Activated CD4-positive, alpha-beta memory T cell treated with anti-CD3 and anti-CD28 coated beads for 36 hours (primary cell): ENCODE measurements at regions of chr13 and their contacts with region 1.

Region 1: GRCh38 chr13:30142486-30143211 is 164.7 kb downstream of the KATNAL1 start:
- DNase-seq: peak; percentile 68
- H3K4me3 Mint-ChIP-seq: no peak overlapping the region
- H3K27ac Mint-ChIP-seq: peak overlapping the region; percentile 92
- H3K4me1 Mint-ChIP-seq: peaks cover 70% of the 10 kb centered on the region
- H3K27me3 Mint-ChIP-seq: no peaks in the 10 kb centered on the region

Region 2: DNA sequence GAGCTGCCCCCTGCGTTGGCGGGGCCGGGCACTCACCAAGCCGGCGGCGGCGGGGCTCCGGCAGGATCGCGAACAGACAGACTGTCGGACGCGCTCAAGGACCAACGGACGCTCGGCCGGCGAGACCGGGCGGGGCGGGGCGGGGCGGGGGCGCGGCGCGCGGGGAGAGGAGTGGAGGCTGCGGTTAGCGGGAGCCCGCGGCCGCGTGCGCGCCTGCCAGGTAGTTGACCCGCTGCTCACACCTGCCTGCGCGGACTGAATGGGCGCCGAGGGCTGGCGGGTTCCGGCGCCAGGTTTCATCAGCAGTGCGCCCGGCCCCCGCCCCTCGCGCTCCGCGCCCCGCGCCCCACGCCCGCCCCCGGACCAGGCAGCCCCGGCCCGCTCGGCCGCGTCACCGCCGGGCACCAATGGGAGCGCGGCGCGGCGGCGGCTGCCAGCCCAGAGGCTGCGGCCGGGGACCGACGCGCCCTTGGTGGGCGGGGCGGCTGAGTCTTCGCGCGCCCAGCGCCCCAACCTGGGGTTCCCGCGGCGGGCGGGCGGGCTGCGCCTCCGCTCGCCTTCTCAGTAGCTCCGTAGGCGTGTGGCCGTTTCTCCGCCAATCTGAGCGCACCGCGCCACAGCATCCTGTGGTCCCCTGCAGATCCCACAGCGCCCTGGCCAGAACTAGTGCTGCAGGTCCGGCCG is 547.1 kb before region 1 on chr13 and contains the start of gene SLC7A1:
- CTCF ChIA-PET with region 1: no interaction called
- POLR2A ChIA-PET with region 1: no interaction called
- intact Hi-C with region 1: no loop called
- DNase-seq: peak; percentile 90
- H3K4me3 Mint-ChIP-seq: peak within 1 kb of the TSS; percentile 89
- H3K27ac Mint-ChIP-seq: peak within 1 kb of the TSS; percentile 97
- H3K4me1 Mint-ChIP-seq: peaks cover 45% of the 10 kb centered on the region
- H3K27me3 Mint-ChIP-seq: peaks cover 1% of the 10 kb centered on the region
- total RNA-seq, gene SLC7A1: 106 to 114 TPM

Region 3: DNA sequence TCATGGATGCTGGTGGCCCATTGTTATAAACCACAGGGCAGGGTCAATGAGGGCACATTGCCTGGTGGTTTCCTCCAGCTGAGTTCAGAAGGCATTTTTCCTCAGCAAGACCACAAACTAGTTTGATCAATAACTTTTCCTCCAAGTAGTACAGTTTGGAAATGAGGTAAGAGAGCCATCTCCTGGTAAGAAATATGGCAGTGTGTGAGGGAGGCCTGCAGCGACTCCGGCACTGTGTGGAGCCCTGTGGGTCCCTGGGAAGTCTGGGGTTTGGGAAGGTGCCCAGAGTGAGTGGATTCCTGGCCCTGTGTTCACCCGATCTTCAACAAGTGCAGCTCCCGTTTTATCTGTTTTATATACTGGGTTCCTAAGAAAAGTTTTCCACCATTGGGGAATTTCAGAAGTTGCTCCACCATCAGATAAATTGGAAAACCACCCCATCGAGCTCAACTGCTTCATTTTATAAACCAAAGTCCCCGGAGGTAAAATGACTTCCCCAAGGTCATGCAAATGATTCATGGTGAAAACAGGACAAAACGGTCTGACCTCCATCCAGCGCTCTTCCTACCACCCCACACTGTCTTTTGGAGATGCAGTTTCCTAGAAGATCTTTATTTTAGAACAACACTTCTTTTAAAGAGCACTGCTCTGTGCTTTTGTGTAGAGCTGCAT is 16.3 kb after region 1 on chr13:
- CTCF ChIA-PET with region 1: interaction called, 82 read pairs
- POLR2A ChIA-PET with region 1: interaction called, 11 read pairs
- intact Hi-C with region 1: loop called (anchors 1 kb)
- DNase-seq: peak; percentile 45
- H3K4me3 Mint-ChIP-seq: no peak overlapping the region
- H3K27ac Mint-ChIP-seq: peak overlapping the region; percentile 80
- H3K4me1 Mint-ChIP-seq: peaks cover 44% of the 10 kb centered on the region
- H3K27me3 Mint-ChIP-seq: no peaks in the 10 kb centered on the region

Region 4: DNA sequence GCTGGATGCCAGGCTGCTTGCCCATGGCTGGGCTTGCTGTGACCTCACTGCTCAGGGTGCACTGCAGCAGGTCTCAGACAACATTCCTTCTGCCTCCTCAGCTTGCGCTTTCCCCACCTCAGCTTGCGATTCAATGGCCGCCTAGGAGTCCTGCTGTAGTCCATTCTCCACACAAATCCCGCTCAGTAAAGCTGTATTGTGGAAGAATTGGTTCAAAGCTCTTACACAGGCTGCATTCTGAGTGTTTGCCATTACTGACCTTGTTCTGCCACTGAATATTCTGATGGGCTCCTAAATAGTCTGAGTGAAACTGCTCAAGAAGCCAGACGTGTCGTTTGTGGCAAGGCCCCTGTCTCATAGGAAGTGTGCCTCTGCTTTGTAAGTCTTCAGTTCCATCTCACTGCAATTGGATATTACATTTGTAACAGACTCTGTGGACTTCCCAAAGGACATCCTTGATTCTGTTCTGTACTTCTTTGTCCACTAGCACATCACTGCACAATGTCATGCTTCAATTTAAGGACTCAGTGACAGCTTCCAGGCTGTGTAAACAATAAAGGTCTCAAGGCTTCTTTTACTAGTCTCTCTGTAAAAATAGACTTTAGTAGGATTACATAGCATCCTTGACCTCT is 114.9 kb after region 1 on chr13:
- CTCF ChIA-PET with region 1: interaction called, 4 read pairs
- POLR2A ChIA-PET with region 1: no interaction called
- intact Hi-C with region 1: loop called (anchors 5 kb)
- DNase-seq: no peak
- H3K4me3 Mint-ChIP-seq: no peak overlapping the region
- H3K27ac Mint-ChIP-seq: no peak overlapping the region
- H3K4me1 Mint-ChIP-seq: peaks cover 25% of the 10 kb centered on the region
- H3K27me3 Mint-ChIP-seq: no peaks in the 10 kb centered on the region

Region 5: DNA sequence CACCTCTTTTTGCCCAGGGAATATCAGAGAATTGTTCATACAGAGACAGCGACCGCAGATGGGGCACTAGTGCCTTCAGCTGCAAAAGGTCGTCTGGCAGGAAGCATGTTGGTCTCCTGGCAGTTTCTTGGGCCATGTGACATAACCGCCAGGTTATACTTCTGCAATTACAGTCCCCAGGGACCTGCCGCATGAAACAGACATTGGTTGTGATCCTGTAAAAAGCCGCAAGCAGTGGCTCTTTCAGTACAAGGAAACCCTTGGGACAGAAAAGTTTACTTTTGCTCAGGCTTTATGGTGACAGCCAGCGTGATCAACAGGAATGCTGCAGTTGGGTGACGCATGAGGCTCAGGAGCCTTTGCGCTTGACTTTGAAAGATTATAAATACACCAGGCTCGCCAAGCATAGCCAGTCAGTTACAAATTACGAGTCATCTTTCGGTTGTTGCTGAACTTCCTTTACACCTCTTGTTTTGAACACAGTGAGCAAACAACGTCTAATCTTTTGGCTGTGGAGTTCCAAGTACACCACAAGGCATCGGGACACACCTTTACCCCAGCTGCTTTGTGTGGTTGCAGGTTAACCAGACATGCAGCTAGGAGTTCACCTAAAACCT is 229.1 kb after region 1 on chr13:
- CTCF ChIA-PET with region 1: no interaction called
- POLR2A ChIA-PET with region 1: interaction called, 6 read pairs
- intact Hi-C with region 1: loop called (anchors 1 kb)
- DNase-seq: peak; percentile 84
- H3K4me3 Mint-ChIP-seq: peak overlapping the region; percentile 55
- H3K27ac Mint-ChIP-seq: peak overlapping the region; percentile 82
- H3K4me1 Mint-ChIP-seq: peaks cover 79% of the 10 kb centered on the region
- H3K27me3 Mint-ChIP-seq: no peaks in the 10 kb centered on the region